Dendritic cell treated with granulocyte-macrophage colony-stimulating factor and Interleukin-4, amounts not matched to agents 40 ng/mL and 50 ng/mL, for 4 days (primary cell): ENCODE measurements at regions of chr19 and their contacts with region 1.

Region 1: DNA sequence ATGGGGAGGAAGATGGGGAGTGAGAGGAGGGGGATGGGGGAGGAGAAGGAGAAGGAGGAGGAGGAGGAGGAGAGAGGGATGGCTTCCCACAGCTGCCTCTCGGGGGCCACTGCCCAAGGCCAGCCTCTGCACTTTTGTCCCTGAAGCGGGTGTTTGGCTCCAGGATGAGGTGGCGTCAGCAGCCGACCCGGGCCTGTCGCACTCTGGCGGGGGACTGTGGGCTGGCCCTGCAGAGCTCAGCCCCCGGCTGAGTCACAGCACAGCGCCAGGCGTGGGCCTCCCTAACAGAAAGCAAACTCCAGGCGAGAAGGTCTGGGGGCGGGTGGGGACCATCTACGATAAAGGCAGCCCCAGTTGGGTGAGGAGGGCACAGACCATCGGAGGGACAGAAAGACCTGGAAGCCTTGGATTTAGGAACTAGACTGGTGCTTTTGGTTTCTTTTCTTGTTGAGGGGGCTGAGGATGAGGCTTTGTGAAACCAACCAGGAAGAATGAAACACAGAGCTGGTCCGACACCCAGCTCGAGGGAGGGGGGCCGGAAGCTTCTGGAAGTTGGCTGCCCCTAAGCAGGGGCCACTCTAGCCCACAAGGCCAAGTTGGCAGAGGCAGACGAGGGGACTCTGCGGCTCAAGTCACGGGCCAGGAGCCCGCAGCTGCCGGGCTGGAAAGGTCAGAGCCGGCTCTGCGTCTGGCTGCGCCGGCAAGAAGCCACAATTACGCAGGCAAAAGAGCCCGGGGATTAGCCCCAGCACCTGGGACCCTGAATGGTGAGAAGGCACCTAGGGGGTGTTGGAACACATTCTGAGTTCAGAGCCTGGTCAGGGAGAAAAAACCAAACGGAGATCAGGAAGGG is 18.2 kb downstream of the LSM4 start:
- H3K4me3 Mint-ChIP-seq: peak overlapping the region; percentile 75
- H3K27ac Mint-ChIP-seq: peak overlapping the region; percentile 87
- H3K4me1 Mint-ChIP-seq: peaks cover 61% of the 10 kb centered on the region
- H3K27me3 Mint-ChIP-seq: no peaks in the 10 kb centered on the region

Region 2: DNA sequence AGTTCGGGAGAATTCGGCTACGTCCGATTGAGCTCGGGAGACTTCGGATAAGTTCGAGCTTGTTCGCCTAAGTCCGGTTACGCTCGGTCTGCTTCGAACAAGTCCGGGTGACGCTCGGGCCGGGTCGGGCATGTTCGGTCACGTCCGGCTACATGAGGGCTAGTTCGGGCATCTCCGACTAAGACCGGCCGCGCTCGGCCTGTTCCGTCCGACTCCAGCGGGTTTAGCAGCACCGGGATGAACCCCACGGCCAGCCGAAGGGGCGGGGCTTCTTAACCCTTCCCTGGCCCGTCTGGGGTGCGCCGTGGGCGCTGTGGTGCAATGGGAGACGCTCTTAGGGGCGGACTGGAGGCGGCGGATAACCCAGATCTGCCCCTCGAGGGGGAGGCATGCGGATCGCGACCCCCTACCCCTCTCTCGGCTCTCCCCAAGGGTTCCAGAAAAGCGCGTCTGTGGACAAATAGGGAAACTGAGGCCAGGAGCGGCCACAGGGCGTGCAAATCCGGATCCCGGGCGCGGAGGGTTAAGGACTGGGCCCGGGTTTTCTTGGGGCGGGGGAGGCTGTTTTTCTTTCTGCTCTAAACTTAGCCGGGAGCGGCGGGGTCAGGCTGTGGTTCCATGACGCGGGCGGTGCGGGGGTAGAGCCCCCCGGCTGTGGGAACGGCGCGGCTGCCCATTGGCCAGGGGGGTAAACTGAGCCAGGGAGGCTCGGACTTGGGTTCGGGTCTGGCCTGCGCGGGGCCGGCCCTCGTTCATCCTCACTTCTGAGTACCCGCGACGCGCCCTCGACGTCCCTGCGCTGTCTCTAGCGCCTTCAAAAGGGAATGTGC is 79.9 kb before region 1 on chr19:
- intact Hi-C with region 1: no loop called
- H3K4me3 Mint-ChIP-seq: peak overlapping the region; percentile 77
- H3K27ac Mint-ChIP-seq: peak overlapping the region; percentile 79
- H3K4me1 Mint-ChIP-seq: peaks cover 28% of the 10 kb centered on the region
- H3K27me3 Mint-ChIP-seq: peaks cover 68% of the 10 kb centered on the region

Region 3: GRCh38 chr19:18291590-18292461 is 12.9 kb before region 1 on chr19:
- intact Hi-C with region 1: loop called (anchors 1 kb)
- H3K4me3 Mint-ChIP-seq: peak overlapping the region; percentile 73
- H3K27ac Mint-ChIP-seq: peak overlapping the region; percentile 97
- H3K4me1 Mint-ChIP-seq: peaks cover 64% of the 10 kb centered on the region
- H3K27me3 Mint-ChIP-seq: peaks cover 2% of the 10 kb centered on the region

Region 4: DNA sequence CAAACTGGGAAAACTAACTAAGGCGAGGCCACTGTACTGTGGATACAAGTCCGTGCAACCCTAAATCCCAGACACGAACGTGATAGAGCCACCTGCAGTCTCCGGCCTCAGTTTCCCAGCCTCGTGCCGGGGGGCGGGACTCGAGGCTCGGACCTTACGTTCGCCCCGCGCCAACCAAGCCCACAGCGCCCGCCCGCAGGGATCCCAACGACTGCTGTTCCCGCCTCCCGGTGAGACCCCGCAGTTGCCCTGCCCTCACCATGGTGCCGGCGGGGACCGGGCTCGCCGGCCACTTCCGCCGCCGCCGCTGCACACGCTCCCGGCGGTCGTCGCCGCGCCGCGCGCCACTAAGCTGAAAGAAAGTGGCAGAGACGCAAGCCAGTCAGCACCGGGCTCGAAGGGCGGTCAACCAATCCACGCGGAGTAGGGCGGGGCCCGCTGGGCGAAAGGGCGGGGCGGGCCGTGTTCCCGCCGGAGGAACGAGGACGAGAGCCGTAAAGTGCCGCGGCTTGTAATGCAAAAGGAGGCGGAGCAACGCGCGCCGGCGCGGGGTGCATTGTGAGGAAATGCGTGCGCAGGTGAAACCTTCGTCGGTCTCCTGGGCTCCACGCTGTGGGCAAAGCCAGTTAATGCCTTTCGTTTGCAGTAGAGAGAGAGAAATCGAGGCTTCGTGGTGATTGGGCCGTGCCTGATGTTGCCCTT is 18.2 kb after region 1 on chr19 and contains the start of gene LSM4:
- intact Hi-C with region 1: loop called (anchors 1 kb)
- H3K4me3 Mint-ChIP-seq: peak within 1 kb of the TSS; percentile 86
- H3K27ac Mint-ChIP-seq: peak within 1 kb of the TSS; percentile 96
- H3K4me1 Mint-ChIP-seq: peaks cover 60% of the 10 kb centered on the region
- H3K27me3 Mint-ChIP-seq: no peaks in the 10 kb centered on the region